Activated CD4-positive, alpha-beta T cell treated with anti-CD3 and anti-CD28 coated beads, Interleukin-2, amount 10 ng/mL, durations not matched to agents 24 days and 14 days (primary cell): ENCODE measurements at regions of chr9 and their contacts with region 1.

Region 1: DNA sequence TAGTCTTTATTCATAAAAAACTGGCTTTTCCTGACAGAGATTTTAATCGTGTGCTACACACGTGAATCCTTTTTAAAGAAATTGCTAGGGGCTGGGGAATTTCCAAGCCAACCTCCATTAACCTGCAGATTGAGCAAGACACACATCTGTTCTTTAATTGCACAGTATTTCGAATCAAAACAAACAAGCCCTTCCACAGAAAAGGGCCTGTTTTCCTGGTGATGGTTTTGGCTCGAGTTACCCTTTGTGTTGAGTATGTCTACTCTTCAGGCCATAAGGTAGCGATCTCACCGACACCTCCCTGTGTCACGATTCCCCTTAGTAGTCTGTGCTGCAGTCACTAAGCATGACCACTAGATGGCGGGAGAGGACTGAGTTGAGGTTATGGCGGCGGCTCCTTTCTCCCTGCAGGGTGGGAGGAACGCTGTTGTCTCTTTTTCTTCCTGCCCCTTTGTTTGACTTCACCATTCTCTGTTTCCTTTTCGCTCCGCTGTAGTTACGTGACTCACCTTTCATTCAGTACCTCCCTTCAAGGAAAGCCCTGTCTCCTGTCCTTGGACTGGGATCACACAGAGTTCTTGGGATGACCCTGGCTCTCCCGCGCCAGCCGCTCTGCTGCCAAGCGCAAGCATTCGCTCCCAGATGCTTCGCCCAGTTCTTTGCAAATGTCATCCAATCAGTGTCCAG is 137.1 kb upstream of the SLC24A2 start:
- DNase-seq: peak; percentile 95
- H3K4me3 Mint-ChIP-seq: peak overlapping the region; percentile 75
- H3K27ac Mint-ChIP-seq: peak overlapping the region; percentile 58
- H3K4me1 Mint-ChIP-seq: peaks cover 25% of the 10 kb centered on the region
- H3K27me3 Mint-ChIP-seq: peaks cover 10% of the 10 kb centered on the region

Region 2: DNA sequence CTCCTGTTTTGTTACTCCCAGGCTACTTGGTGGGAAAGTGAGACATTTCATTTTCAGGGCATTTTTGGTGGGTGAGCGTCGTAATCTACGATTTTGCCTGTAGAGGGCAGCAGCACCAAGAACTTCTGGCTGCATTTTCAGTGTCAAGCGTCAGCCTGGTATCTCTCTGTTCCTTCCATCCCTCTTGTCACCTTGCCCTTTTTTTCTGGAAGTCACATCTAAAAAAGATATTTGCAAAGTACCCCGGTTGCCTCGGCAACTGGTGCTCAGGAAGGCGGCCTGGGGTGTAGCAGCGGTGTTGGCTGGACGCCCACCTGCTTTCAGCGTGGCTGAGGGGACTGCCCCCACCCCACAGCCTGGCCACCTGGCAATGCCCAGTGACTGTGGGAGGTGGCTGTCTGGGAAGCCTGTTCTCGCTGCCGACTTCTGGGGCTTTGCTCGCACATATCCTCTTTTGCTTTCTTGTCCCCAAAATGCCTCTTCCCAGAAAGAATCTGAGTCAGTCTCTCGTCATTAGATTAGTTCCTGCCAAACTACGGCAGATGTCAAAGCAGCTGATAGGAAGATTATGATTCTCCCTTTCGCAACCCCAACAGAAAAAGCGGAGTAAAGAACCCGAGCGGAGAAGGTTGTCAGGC is 432.7 kb before region 1 on chr9:
- intact Hi-C with region 1: loop called (anchors 10 kb)
- DNase-seq: peak; percentile 84
- H3K4me3 Mint-ChIP-seq: peak overlapping the region; percentile 9
- H3K27ac Mint-ChIP-seq: no peak overlapping the region
- H3K4me1 Mint-ChIP-seq: peaks cover 10% of the 10 kb centered on the region
- H3K27me3 Mint-ChIP-seq: peaks cover 3% of the 10 kb centered on the region

Region 3: GRCh38 chr9:19913151-19913550 is 12.8 kb before region 1 on chr9:
- intact Hi-C with region 1: no loop called
- DNase-seq: no peak
- H3K4me3 Mint-ChIP-seq: no peak overlapping the region
- H3K27ac Mint-ChIP-seq: no peak overlapping the region
- H3K4me1 Mint-ChIP-seq: no peaks in the 10 kb centered on the region
- H3K27me3 Mint-ChIP-seq: no peaks in the 10 kb centered on the region

Region 4: DNA sequence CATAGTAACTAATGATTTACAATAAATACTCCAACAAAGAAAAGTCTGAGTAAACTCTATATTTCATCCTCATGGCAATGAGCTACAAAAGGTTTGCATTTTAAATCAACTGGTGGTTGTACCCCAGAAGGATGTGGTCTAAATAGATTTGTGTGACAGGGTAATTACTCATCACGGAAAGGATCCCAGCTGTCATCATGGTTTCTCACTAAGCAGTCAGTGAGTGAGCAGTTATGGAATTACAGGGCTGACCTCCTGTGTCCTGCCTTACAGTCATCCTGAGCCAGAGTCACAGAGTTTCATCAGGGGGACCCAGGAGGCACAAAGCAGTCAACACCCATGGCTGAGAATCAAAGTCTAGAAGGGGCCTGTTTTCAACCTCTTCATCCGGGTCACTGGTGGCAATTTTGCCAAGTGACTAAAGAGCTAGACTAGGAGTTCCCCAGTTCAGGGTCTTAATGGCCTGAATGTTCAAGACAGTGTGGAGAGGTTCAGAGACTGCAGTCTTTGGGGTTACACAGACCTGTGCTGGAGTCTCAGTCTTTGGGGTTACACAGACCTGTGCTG is 73.6 kb after region 1 on chr9:
- intact Hi-C with region 1: loop called (anchors 1 kb)
- DNase-seq: peak; percentile 88
- H3K4me3 Mint-ChIP-seq: peak overlapping the region; percentile 74
- H3K27ac Mint-ChIP-seq: peak overlapping the region; percentile 99
- H3K4me1 Mint-ChIP-seq: peaks cover 53% of the 10 kb centered on the region
- H3K27me3 Mint-ChIP-seq: no peaks in the 10 kb centered on the region

Region 5: GRCh38 chr9:20319641-20320337 is 393.8 kb after region 1 on chr9:
- intact Hi-C with region 1: loop called (anchors 2 kb)
- DNase-seq: peak; percentile 80
- H3K4me3 Mint-ChIP-seq: peak overlapping the region; percentile 60
- H3K27ac Mint-ChIP-seq: peak overlapping the region; percentile 94
- H3K4me1 Mint-ChIP-seq: peaks cover 78% of the 10 kb centered on the region
- H3K27me3 Mint-ChIP-seq: no peaks in the 10 kb centered on the region

Region 6: GRCh38 chr9:20508242-20508641 is 582.3 kb after region 1 on chr9:
- intact Hi-C with region 1: loop called (anchors 10 kb)
- DNase-seq: peak; percentile 79
- H3K4me3 Mint-ChIP-seq: peak overlapping the region; percentile 61
- H3K27ac Mint-ChIP-seq: peak overlapping the region; percentile 77
- H3K4me1 Mint-ChIP-seq: peaks cover 67% of the 10 kb centered on the region
- H3K27me3 Mint-ChIP-seq: no peaks in the 10 kb centered on the region

Region 7: GRCh38 chr9:20884985-20885593 is 959.1 kb after region 1 on chr9:
- intact Hi-C with region 1: loop called (anchors 1 kb)
- DNase-seq: peak; percentile 85
- H3K4me3 Mint-ChIP-seq: no peak overlapping the region
- H3K27ac Mint-ChIP-seq: no peak overlapping the region
- H3K4me1 Mint-ChIP-seq: peaks cover 1% of the 10 kb centered on the region
- H3K27me3 Mint-ChIP-seq: no peaks in the 10 kb centered on the region

Region 8: GRCh38 chr9:20941174-20941690 is 1015.3 kb after region 1 on chr9:
- intact Hi-C with region 1: loop called (anchors 1 kb)
- DNase-seq: peak; percentile 88
- H3K4me3 Mint-ChIP-seq: no peak overlapping the region
- H3K27ac Mint-ChIP-seq: no peak overlapping the region
- H3K4me1 Mint-ChIP-seq: peaks cover 3% of the 10 kb centered on the region
- H3K27me3 Mint-ChIP-seq: no peaks in the 10 kb centered on the region